Tibial artery (tissue), 4 donors: ENCODE measurements at regions of chr6 and their contacts with region 1.

Region 1: DNA sequence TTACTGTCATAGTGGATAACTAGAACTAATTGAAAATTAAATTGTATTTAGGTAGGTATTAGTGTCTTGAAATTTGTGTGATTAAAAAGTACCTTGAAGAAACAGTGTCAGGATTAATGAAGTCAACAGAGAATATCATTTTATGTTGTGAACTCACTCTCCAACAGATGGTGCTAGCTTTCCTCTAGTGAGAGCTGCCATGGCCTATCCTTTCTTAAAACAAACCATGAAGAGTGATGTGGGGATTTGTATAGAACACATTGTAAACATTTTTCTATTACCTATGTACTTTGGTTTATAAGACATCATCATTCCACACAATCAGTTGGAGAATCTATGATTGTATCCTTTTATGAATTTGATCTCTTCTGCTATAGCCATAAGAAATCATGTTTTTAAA is 4.8 kb upstream of the SRSF12 start:
- DNase-seq: no peak
- H3K4me3 ChIP-seq: no peak overlapping the region
- H3K27ac ChIP-seq: no peak overlapping the region
- H3K4me1 ChIP-seq: peaks cover 0 to 9% (median 5%) of the 10 kb centered on the region in 4 donors
- H3K27me3 ChIP-seq: no peaks in the 10 kb centered on the region
- CTCF ChIP-seq: peak; percentile 57 to 61

Region 2: DNA sequence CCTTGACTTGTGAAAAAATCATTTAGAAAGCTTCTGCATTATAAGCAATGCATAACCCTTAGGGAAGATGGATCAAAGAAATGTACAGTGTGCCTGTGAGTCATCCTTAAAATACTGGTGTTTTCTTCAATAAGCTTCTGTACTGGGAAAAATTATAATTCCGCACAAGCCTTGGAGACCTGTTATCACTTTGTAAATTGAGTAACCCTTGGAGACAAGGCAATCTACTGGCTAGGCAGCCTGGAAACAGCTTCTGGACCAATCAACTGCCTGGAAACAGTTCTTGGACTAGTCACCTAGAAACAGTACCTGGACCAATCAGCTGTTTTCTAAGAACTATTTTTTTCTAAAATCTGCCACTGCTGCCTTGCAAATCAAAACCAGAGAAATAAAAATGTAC is 133.4 kb before region 1 on chr6:
- intact Hi-C with region 1: loop called (anchors 5 kb)
- DNase-seq: no peak
- H3K4me3 ChIP-seq: no peak overlapping the region
- H3K27ac ChIP-seq: no peak overlapping the region
- H3K4me1 ChIP-seq: no peaks in the 10 kb centered on the region
- H3K27me3 ChIP-seq: no peaks in the 10 kb centered on the region
- CTCF ChIP-seq: no peak

Region 3: GRCh38 chr6:89242574-89243330 is 120.1 kb after region 1 on chr6:
- intact Hi-C with region 1: loop called (anchors 2 kb)
- DNase-seq: no peak
- H3K4me3 ChIP-seq: no peak overlapping the region
- H3K27ac ChIP-seq: no peak overlapping the region
- H3K4me1 ChIP-seq: no peaks in the 10 kb centered on the region
- H3K27me3 ChIP-seq: no peaks in the 10 kb centered on the region
- CTCF ChIP-seq: peak; percentile 49 to 72